ENCODE measurements at regions of chr10 and their contacts with region 1.

Region 1: DNA sequence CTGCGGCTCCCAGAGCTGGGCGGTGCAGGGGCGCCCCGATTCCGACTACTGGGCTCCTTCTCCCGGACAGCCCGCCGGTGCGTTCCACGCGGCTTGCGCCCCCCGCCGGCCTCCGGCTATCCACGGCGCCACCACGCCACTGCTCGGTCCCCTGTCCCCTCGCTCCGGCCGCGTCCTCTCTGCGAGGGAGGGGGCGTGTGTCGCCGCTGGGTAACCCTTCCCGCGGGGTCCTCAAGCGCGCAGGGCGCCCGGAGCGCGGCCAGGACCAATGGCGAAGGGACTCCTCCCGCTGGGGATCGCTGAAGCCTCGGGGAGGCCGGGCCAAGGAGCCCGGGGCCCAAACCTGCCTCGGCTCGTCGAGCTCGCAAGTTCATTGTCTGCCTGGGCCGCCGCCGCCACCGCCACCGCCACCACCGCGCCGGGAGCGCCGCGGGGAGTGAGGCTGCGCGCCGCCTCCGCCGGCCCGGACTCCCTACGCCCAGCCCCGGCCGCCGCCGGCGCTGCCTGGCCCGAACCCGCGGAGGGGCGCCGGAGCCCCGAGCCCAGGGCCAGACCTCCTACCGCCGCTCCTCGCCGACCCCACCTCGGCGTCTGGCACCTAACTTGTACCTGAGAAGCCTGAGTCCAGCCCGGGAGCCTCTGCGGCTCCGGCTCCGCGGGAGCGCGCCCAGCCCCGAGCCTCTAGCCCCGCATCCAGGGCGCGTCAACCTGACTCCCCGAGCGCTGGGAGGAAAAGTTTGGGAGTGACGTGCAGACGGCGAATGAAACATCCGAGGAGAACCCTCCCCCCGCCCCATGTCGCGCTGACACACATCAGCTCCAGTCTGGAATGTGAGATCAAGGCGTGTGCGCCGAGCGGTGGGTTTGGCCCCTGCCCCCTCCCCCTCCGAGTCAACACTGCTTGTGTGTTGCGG is at the start of gene CHST15:
- DNase-seq: peak; percentile 46
- H3K4me3 Mint-ChIP-seq: peak within 1 kb of the TSS; percentile 76
- H3K27ac Mint-ChIP-seq: no peak within 1 kb of the TSS
- H3K4me1 Mint-ChIP-seq: peaks cover 27% of the 10 kb centered on the region
- H3K27me3 Mint-ChIP-seq: no peaks in the 10 kb centered on the region
- CTCF ChIP-seq: no peak
- total RNA-seq, gene CHST15: 18.3 and 19.3 TPM in 2 replicates

Region 2: GRCh38 chr10:124259139-124259825 is 166.2 kb after region 1 on chr10:
- CTCF ChIA-PET with region 1: no interaction called
- intact Hi-C with region 1: loop called (anchors 10 kb)
- DNase-seq: peak; percentile 17
- H3K4me3 Mint-ChIP-seq: no peak overlapping the region
- H3K27ac Mint-ChIP-seq: no peak overlapping the region
- H3K4me1 Mint-ChIP-seq: no peaks in the 10 kb centered on the region
- H3K27me3 Mint-ChIP-seq: peaks cover 15% of the 10 kb centered on the region
- CTCF ChIP-seq: no peak

Region 3: DNA sequence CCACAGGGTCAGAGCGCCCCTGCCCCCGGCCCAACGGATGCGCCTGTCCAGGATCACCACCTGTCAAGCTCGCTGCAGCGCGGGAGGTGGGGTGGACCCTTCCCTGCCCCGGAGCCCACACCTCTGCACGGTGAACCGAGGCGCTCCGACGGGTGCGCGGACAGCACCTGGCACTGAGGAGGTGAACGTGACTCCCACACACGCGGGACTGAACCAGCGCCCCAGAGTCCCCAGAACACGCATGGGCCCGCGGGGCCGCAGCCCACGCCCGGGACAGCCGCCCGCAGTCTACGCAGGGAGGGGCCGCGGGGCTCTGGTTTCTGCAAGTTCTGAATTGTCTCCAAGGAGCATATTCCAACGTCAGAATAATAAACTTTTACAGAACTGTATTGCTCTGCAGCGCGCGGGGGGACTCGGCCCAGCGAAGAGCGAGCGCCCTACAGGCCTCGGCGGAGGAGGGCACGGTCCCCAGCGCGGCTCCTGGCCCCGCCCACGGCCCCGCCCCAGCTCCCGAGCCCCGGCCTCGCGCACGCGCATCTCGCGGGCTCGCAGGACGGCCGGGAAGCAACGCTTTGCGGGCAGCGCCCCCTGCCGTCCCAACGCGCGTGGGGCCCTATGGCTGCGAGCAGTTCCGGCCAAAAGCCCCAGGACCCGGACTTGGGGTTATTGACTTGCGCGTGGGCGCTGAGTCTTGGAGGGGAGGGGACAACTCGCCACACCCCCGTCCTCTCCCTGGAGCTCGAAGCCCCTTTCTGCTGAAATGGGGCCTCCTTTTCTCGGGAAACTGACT is 295.9 kb after region 1 on chr10:
- CTCF ChIA-PET with region 1: no interaction called
- intact Hi-C with region 1: loop called (anchors 10 kb)
- DNase-seq: peak; percentile 89
- H3K4me3 Mint-ChIP-seq: no peak overlapping the region
- H3K27ac Mint-ChIP-seq: no peak overlapping the region
- H3K4me1 Mint-ChIP-seq: peaks cover 3% of the 10 kb centered on the region
- H3K27me3 Mint-ChIP-seq: no peaks in the 10 kb centered on the region
- CTCF ChIP-seq: peak; percentile 73

Measured in Calu3 (cell line).